Transverse colon (tissue), 4 donors: ENCODE measurements at regions of chr6 and their contacts with region 1.

Region 1: GRCh38 chr6:74689601-74690000 is 516.3 kb downstream of the COL12A1 start:
- DNase-seq: no peak
- H3K4me3 ChIP-seq: no peak overlapping the region
- H3K27ac ChIP-seq: no peak overlapping the region
- H3K4me1 ChIP-seq: no peaks in the 10 kb centered on the region
- H3K27me3 ChIP-seq: no peaks in the 10 kb centered on the region
- CTCF ChIP-seq: no peak
- EP300 ChIP-seq: no peak
- POLR2A ChIP-seq: no peak

Region 2: DNA sequence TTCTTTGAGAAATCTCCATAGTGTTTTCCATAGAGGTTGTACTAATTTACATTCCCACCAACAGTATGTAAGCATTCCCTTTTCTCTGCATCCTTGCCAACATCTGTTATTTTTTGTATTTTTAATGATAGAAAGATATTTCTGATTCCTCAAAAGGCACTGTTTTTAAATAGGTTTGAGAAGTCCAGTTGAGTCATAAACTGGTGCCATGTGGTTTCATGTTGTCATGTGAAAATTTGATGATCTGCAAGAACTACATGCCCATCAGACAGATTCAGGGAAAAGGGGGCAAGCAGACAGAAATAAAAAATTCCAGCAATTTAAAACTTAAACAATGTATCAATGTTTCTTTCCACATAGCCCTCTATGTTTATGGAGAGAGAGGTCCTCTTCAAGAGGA is 1840.3 kb before region 1 on chr6:
- in situ Hi-C with region 1: no loop called
- intact Hi-C with region 1: loop called (anchors 5 kb)
- DNase-seq: no peak
- H3K4me3 ChIP-seq: no peak overlapping the region
- H3K27ac ChIP-seq: no peak overlapping the region
- H3K4me1 ChIP-seq: no peaks in the 10 kb centered on the region
- H3K27me3 ChIP-seq: no peaks in the 10 kb centered on the region
- CTCF ChIP-seq: no peak
- EP300 ChIP-seq: no peak
- POLR2A ChIP-seq: no peak

Region 3: DNA sequence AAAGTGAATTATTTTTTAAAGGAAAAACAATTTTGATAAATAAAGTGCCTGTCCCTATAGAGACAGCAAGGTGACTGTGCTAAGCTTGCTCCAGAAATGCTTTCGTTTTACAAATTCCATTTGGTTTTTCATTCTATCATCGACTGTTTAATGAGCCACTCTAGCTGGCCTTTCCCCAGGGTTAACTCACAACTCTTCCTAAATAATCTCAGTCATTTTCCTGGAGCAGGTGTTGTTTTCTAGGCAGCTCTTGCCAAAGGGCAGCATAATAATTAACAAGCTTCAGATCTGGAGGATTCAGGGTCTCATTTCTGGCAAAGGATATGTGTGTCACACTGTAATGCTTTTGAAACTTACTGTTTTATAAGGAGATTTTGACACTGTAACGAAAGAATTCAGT is 1648.5 kb before region 1 on chr6:
- in situ Hi-C with region 1: no loop called
- intact Hi-C with region 1: loop called (anchors 10 kb)
- DNase-seq: no peak
- H3K4me3 ChIP-seq: no peak overlapping the region
- H3K27ac ChIP-seq: no peak overlapping the region
- H3K4me1 ChIP-seq: no peaks in the 10 kb centered on the region
- H3K27me3 ChIP-seq: no peaks in the 10 kb centered on the region
- CTCF ChIP-seq: no peak
- EP300 ChIP-seq: no peak
- POLR2A ChIP-seq: no peak

Region 4: DNA sequence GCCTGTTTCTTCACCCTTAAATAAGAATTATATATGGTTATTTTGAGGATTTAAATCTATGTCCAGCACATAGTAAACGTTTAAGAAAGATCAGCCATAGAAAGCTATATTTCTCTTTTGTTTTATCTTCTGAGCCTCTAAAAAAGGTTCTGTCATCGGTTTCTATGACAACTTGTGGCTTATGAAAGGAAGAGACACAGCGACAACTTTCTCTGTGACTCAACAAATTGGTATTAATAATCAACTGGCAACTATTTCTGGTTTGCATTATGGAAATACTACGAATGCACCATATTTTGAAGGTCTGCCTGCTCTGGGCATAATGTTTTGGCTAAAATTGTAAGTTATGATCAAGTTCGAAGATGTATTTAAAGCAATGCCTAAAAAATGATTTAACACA is 242.6 kb before region 1 on chr6:
- in situ Hi-C with region 1: no loop called
- intact Hi-C with region 1: no loop called
- DNase-seq: no peak
- H3K4me3 ChIP-seq: no peak overlapping the region
- H3K27ac ChIP-seq: no peak overlapping the region
- H3K4me1 ChIP-seq: no peaks in the 10 kb centered on the region
- H3K27me3 ChIP-seq: no peaks in the 10 kb centered on the region
- CTCF ChIP-seq: no peak
- EP300 ChIP-seq: no peak
- POLR2A ChIP-seq: no peak

Region 5: DNA sequence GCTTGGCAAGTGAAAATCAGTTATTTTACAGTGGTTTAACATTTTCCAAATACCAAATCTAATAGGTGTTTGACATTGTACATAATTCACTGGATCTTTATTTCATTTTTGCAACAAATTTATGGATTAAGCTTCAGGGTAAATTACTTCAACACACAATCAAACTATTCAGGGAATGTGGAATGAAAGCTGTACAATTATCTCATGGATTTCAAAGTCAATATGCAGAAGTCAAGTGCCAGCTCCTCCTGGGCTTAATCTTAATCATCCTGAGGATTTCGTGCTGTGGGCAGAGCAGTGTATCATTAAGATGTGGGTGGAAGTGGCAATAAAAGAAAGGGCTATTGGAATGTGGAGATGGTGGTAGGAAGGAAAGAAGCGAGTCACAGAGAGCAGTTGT is 32.6 kb before region 1 on chr6:
- in situ Hi-C with region 1: no loop called
- intact Hi-C with region 1: no loop called
- DNase-seq: no peak
- H3K4me3 ChIP-seq: no peak overlapping the region
- H3K27ac ChIP-seq: no peak overlapping the region
- H3K4me1 ChIP-seq: no peaks in the 10 kb centered on the region
- H3K27me3 ChIP-seq: no peaks in the 10 kb centered on the region
- CTCF ChIP-seq: no peak
- EP300 ChIP-seq: no peak
- POLR2A ChIP-seq: no peak

Region 6: GRCh38 chr6:74768120-74768519 is 78.5 kb after region 1 on chr6:
- in situ Hi-C with region 1: no loop called
- intact Hi-C with region 1: no loop called
- DNase-seq: no peak
- H3K4me3 ChIP-seq: no peak overlapping the region
- H3K27ac ChIP-seq: no peak overlapping the region
- H3K4me1 ChIP-seq: no peaks in the 10 kb centered on the region
- H3K27me3 ChIP-seq: no peaks in the 10 kb centered on the region
- CTCF ChIP-seq: no peak
- EP300 ChIP-seq: no peak
- POLR2A ChIP-seq: no peak